ENCODE measurements at regions of chr16 and their contacts with region 1.

Region 1: DNA sequence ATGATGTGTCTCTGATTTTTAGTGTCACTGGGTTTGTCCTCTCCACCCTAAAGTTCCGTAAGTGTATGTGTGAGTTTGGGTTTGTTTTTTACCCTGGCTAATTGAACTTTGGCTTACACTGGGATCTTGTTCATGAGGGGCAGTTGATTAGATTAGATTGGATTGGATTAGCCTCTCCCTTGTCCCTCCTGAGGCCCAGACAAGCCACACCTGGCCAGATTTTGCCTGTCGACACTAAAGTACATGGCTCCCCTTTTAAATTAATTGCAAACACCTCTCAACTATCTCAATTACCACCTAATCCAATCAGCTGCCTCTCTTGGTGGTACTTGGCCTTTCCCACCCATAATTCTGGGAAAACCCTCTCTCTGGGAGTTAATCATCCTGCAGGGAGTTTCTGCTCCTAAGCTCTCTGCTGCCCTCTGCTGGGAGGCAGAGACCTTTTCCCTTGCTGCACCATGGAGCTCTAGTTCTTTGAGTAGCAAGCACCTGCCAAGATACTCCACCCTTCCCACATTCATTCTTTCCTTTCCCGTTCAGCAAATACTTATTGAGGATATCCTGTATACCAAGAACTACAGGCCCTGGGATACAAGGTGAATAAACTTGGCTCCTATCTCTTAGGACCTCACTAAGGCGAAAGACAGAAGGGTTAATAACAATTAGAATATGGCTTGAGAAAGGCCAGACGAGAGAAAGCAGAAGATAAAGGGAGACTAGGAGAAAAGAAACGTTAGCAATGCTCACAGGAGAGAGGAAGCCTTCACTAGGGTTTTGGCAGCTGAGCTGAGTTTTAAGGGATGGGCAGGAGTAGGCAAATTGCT is 60.0 kb upstream of the MPHOSPH6 start:
- DNase-seq: peak; percentile 76
- H3K4me3 ChIP-seq: no peak overlapping the region
- H3K27ac ChIP-seq: no peak overlapping the region
- H3K4me1 ChIP-seq: no peaks in the 10 kb centered on the region
- H3K27me3 ChIP-seq: peaks cover 9 to 18% of the 10 kb centered on the region in 2 experiments
- CTCF ChIP-seq: peak; percentile 88 to 92
- POLR2A ChIP-seq: no peak

Region 2: GRCh38 chr16:81901483-81901882 is 328.5 kb before region 1 on chr16:
- CTCF ChIA-PET with region 1: interaction called, 10 read pairs
- POLR2A ChIA-PET with region 1: no interaction called
- dilution Hi-C with region 1: no loop called
- intact Hi-C with region 1: no loop called
- DNase-seq: peak; percentile 97
- H3K4me3 ChIP-seq: peak overlapping the region in 1 of 3 experiments; percentile 4
- H3K27ac ChIP-seq: peak overlapping the region; percentile 88
- H3K4me1 ChIP-seq: peaks cover 31% of the 10 kb centered on the region
- H3K27me3 ChIP-seq: no peaks in the 10 kb centered on the region
- CTCF ChIP-seq: no peak
- POLR2A ChIP-seq: peak; percentile 57

Region 3: DNA sequence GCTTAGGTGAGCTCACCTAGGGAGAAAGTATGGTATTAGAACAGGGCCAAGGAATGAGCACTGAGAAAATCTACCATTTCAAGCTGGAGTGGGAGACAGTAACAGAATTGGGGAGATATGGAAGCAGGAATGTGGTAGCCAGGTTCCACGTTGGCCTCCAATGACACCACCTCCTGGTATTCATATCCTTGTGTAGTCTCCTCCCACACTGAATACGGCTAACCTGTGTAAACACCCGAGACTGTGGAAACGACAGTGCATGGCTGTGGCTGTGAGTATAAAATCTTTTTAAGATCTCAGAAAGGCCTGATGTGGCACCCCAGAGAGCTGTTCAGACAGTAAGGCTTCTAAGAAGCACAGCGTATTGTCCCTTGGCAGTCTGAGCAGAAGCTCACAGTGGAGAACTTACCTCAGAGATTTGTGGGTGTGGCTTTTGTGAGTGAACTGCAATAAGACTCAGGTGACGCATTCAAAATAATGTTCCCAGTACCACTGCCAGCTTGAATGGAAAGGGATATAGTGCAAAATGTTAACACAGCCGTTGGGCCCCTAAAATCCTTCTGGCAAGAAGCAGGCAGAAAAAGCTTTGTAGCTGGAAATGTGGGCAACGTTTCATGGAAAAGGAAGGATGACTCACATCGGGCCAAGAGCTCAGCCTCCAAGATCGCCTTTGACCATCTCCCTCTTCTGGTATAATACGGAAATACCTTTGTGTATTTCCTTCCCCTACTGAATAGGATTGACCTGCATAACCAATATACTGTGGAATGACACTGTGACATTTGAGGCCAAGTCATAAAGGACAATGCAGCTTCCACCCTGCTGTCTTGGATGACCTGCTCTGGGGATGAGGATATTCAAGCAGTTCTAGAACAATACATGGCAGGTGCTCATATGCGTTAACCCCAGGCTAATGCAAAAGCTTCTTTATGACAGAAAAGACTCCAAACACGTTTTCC is 233.1 kb before region 1 on chr16:
- CTCF ChIA-PET with region 1: interaction called, 33 read pairs
- POLR2A ChIA-PET with region 1: no interaction called
- dilution Hi-C with region 1: no loop called
- intact Hi-C with region 1: loop called (anchors 1 kb)
- DNase-seq: peak; percentile 90
- H3K4me3 ChIP-seq: peak overlapping the region in 1 of 3 experiments; percentile 33
- H3K27ac ChIP-seq: peak overlapping the region; percentile 96
- H3K4me1 ChIP-seq: peaks cover 41% of the 10 kb centered on the region
- H3K27me3 ChIP-seq: no peaks in the 10 kb centered on the region
- CTCF ChIP-seq: peak; percentile 34 to 39
- POLR2A ChIP-seq: no peak

Region 4: DNA sequence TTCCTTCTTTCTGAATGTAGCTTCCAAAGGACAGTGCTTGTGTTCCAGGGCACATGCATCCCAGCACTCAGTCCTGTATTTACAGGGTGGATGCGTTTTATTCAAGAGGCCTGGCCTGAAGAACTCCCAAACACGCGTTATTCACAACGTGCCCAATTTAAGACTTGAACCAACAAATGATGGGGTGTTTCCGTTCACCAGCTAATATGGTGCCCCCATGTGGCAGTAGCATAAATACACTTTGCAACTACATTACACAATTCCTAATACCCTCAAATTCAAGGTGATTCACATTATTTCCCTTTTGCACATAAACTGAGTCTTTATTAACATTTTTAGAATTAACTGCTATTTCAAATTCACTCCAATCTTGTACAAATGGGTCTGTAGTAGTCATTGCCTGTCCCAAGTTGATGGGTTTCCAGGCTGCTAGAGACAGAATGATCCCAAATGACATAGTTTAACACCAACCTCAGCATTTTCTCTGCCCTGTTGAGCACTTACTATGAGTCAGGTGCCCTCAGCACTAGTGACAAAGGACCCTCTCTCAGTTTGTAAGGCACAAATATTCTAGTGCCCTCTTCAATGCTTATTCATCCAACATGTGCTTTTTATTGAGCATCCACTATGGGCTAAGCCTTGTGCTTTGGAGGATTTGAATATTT is 168.0 kb before region 1 on chr16:
- CTCF ChIA-PET with region 1: interaction called, 58 read pairs
- POLR2A ChIA-PET with region 1: no interaction called
- dilution Hi-C with region 1: no loop called
- intact Hi-C with region 1: loop called (anchors 1 kb)
- DNase-seq: peak; percentile 55
- H3K4me3 ChIP-seq: no peak overlapping the region
- H3K27ac ChIP-seq: no peak overlapping the region
- H3K4me1 ChIP-seq: no peaks in the 10 kb centered on the region
- H3K27me3 ChIP-seq: peaks cover 11 to 20% of the 10 kb centered on the region in 2 experiments
- CTCF ChIP-seq: peak; percentile 51 to 59
- POLR2A ChIP-seq: no peak

Region 5: DNA sequence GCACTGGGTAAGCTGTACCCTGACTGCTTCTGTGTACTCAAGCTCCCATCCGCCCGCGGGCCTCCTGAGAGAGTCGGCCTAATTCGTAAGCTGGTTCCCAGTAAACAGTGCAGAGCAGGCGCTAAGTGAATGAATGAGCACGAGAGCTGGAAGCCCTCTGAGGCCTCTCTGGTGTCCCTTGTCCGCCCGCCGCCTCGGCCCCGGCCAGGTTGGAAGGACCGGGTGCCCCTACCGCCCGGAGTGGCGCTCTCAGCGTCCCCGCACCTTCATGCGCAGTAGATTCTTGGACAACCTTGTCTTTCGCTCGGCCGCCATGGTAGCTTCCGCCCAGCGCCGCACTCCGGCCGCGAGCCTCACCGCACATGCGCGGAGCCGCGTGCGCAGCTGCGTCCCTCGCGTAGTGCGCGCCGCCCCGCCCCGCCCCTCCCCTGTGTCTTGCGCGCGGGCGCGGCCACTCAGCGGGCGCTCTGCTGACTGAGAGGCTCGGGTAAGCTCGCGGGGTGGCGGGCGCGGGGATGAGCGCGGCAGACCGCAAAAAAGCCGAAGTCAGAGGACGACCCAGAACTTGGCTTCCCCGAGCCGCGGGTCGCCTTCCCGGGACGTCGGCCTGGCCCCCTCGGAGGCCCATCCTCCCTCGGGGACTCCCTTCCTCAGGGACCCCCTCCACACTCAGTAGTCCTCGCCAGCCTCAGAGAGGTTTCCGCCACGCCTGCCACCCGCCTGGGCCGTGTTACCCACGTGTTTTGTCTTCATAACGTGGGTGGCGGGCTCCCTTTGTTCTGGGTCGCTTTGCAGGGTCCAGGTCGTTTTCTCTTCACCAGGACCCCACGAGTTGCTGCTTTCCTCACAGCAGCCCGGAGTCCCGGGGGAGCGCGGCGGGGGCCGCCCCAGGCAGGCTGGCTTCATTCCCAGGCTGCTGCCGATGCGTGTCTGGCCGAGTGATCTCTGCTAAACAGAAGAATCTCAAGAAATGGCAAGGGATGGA is 59.9 kb before region 1 on chr16 and contains the start of gene MPHOSPH6:
- CTCF ChIA-PET with region 1: interaction called, 40 read pairs
- POLR2A ChIA-PET with region 1: no interaction called
- dilution Hi-C with region 1: no loop called
- intact Hi-C with region 1: loop called (anchors 1 kb)
- DNase-seq: peak; percentile 92
- H3K4me3 ChIP-seq: peak within 1 kb of the TSS; percentile 63 to 92 (median 86)
- H3K27ac ChIP-seq: peak within 1 kb of the TSS; percentile 72
- H3K4me1 ChIP-seq: peaks cover 12% of the 10 kb centered on the region
- H3K27me3 ChIP-seq: peaks cover 9 to 17% of the 10 kb centered on the region in 2 experiments
- CTCF ChIP-seq: no peak
- POLR2A ChIP-seq: peak; percentile 74
- total RNA-seq, gene MPHOSPH6: 32.0 and 32.5 TPM in 2 replicates

Region 6: GRCh38 chr16:82329485-82330180 is 99.6 kb after region 1 on chr16:
- CTCF ChIA-PET with region 1: no interaction called
- POLR2A ChIA-PET with region 1: no interaction called
- dilution Hi-C with region 1: no loop called
- intact Hi-C with region 1: no loop called
- DNase-seq: no peak
- H3K4me3 ChIP-seq: no peak overlapping the region
- H3K27ac ChIP-seq: no peak overlapping the region
- H3K4me1 ChIP-seq: no peaks in the 10 kb centered on the region
- H3K27me3 ChIP-seq: no peaks in the 10 kb centered on the region
- CTCF ChIP-seq: no peak
- POLR2A ChIP-seq: no peak

Region 7: DNA sequence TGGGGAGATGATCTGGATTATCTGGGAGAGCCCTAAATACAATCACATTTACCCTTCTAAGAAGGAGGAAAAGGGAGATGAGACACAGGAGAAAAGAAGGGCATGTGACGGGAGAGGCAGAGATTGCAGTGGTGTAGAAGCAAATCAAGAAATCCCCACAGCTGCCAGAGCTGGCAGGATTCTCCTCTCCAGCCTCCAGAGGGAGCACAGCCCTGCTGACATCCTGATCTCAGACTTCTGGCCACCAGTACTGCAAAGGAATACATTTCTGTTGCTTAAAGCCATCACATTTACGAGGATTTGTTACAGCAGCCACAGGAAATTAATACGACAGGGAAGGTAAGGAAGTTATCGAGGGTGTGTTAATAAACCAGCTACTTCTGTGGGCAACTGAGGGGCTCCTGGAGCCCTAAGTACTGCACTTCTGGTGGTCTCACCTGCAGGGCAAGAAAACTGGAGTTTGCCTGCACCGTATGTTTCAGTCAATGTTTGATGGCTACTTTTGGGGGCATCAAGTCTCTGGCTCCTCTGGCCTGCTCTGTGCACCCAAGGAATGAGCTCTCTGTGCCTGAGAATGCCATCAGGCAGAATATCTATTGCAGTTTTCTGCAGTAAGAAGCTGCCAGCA is 373.9 kb after region 1 on chr16:
- CTCF ChIA-PET with region 1: no interaction called
- POLR2A ChIA-PET with region 1: no interaction called
- dilution Hi-C with region 1: no loop called
- intact Hi-C with region 1: no loop called
- DNase-seq: peak; percentile 68
- H3K4me3 ChIP-seq: no peak overlapping the region
- H3K27ac ChIP-seq: no peak overlapping the region
- H3K4me1 ChIP-seq: no peaks in the 10 kb centered on the region
- H3K27me3 ChIP-seq: peaks cover 2 to 4% of the 10 kb centered on the region in 2 experiments
- CTCF ChIP-seq: peak; percentile 61 to 80
- POLR2A ChIP-seq: no peak

Region 8: GRCh38 chr16:83215406-83216001 is 985.5 kb after region 1 on chr16:
- CTCF ChIA-PET with region 1: interaction called, 10 read pairs
- POLR2A ChIA-PET with region 1: no interaction called
- dilution Hi-C with region 1: no loop called
- intact Hi-C with region 1: no loop called
- DNase-seq: peak; percentile 48
- H3K4me3 ChIP-seq: no peak overlapping the region
- H3K27ac ChIP-seq: no peak overlapping the region
- H3K4me1 ChIP-seq: no peaks in the 10 kb centered on the region
- H3K27me3 ChIP-seq: no peaks in the 10 kb centered on the region
- CTCF ChIP-seq: peak; percentile 74 to 78
- POLR2A ChIP-seq: no peak

Measured in endothelial cell of umbilical vein (primary cell).